ENCODE measurements at regions of chr6 and their contacts with region 1.

Region 1: GRCh38 chr6:97215157-97215769 is 67.8 kb downstream of the MMS22L start:
- DNase-seq: peak; percentile 26
- H3K4me3 ChIP-seq: no peak overlapping the region
- CTCF ChIP-seq: peak; percentile 56

Region 2: GRCh38 chr6:97186416-97186999 is 28.8 kb before region 1 on chr6:
- CTCF ChIA-PET with region 1: interaction called, 35 read pairs
- POLR2A ChIA-PET with region 1: no interaction called
- DNase-seq: no peak
- H3K4me3 ChIP-seq: no peak overlapping the region
- CTCF ChIP-seq: peak; percentile 89

Region 3: GRCh38 chr6:97195117-97195516 is 20.1 kb before region 1 on chr6:
- CTCF ChIA-PET with region 1: interaction called, 53 read pairs
- POLR2A ChIA-PET with region 1: no interaction called
- DNase-seq: no peak
- H3K4me3 ChIP-seq: no peak overlapping the region
- CTCF ChIP-seq: no peak

Region 4: GRCh38 chr6:97203343-97203742 is 11.9 kb before region 1 on chr6:
- CTCF ChIA-PET with region 1: interaction called, 54 read pairs
- POLR2A ChIA-PET with region 1: no interaction called
- DNase-seq: no peak
- H3K4me3 ChIP-seq: no peak overlapping the region
- CTCF ChIP-seq: no peak

Region 5: GRCh38 chr6:97231911-97232310 is 16.6 kb after region 1 on chr6:
- CTCF ChIA-PET with region 1: interaction called, 23 read pairs
- POLR2A ChIA-PET with region 1: no interaction called
- DNase-seq: no peak
- H3K4me3 ChIP-seq: no peak overlapping the region
- CTCF ChIP-seq: no peak

Region 6: GRCh38 chr6:97240222-97240621 is 25.0 kb after region 1 on chr6:
- CTCF ChIA-PET with region 1: interaction called, 10 read pairs
- POLR2A ChIA-PET with region 1: no interaction called
- DNase-seq: peak; percentile 12
- H3K4me3 ChIP-seq: no peak overlapping the region
- CTCF ChIP-seq: no peak

Region 7: GRCh38 chr6:97394160-97394748 is 179.0 kb after region 1 on chr6:
- CTCF ChIA-PET with region 1: interaction called, 65 read pairs
- POLR2A ChIA-PET with region 1: no interaction called
- DNase-seq: no peak
- H3K4me3 ChIP-seq: no peak overlapping the region
- CTCF ChIP-seq: peak; percentile 73

Measured in AG04449 (cell line).